ENCODE measurements at regions of chr7 and their contacts with region 1.

Region 1: DNA sequence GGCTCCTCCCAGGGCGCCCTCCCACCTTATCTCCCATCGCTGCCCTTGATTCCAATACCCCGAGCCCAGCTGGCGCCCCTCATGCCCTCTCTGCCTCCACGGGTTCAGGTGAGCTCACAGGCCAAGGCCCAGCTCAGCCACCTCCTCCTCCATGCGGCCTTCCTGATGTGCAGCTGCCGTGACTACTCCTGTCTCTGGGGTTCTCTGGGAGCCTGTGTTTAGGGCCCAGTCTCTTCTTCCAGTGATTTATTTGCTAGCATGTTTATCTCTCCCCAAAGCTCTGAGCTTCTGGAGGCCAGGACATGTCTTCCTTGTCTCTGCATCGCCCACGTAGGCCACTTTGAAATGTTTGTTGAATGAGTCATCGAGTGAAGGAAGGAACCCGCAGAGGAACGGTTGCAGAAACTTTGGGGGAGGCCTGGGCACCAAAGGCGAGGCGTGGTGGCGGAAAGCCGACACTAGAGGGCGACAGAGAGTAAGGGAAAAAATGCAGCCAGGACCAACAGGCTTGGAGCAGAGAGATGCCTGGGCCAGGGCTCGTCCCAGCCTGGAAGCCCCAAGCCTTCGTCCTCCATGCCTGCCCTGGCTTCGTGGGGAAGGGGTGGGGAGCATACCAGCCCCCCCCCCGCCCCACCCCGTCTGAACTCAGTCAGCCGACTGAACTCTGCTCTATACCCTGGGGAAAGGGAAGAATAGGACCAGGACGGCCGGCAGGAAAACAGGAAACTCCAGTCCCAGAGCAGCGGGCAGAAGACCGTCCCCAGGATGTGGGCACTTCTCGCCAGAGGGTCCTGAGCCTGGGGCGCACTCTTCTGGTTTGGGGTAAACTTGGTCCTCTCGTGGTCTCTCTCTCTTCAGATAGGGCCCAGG is 10.9 kb upstream of the HSPB1 start:
- H3K4me3 ChIP-seq: no peak overlapping the region
- H3K27ac ChIP-seq: peak overlapping the region; percentile 48; the same call in 1 of the 2 replicates
- H3K4me1 ChIP-seq: no peaks in the 10 kb centered on the region
- CTCF ChIP-seq: peak; percentile 80

Region 2: DNA sequence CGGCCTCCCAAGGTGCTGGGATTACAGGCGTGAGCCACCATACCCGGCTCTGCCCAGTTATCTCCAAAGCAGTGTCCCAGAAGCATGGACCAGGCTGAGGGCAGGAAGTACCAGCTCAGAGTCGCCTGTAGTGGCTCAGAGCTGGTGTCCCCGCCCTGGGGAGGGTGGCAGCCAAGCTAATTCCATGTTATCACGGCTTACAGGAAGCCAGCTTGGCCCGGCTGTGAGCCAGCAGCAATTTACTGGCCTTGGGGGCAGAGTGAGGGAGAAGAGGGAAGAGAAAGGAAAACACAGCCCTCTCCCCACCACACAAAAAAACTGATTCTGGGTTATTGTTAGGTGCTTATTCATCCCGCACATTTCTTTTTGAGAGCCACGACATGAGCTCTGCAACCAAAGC is 640.9 kb before region 1 on chr7:
- CTCF ChIA-PET with region 1: no interaction called
- POLR2A ChIA-PET with region 1: interaction called, 12 read pairs
- H3K4me3 ChIP-seq: no peak overlapping the region
- H3K27ac ChIP-seq: no peak overlapping the region
- H3K4me1 ChIP-seq: no peaks in the 10 kb centered on the region
- CTCF ChIP-seq: no peak

Region 3: GRCh38 chr7:75827638-75828037 is 463.9 kb before region 1 on chr7:
- CTCF ChIA-PET with region 1: no interaction called
- POLR2A ChIA-PET with region 1: no interaction called
- H3K4me3 ChIP-seq: no peak overlapping the region
- H3K27ac ChIP-seq: no peak overlapping the region
- H3K4me1 ChIP-seq: no peaks in the 10 kb centered on the region
- CTCF ChIP-seq: no peak

Region 4: GRCh38 chr7:75847707-75848106 is 443.9 kb before region 1 on chr7:
- CTCF ChIA-PET with region 1: no interaction called
- POLR2A ChIA-PET with region 1: no interaction called
- H3K4me3 ChIP-seq: no peak overlapping the region
- H3K27ac ChIP-seq: no peak overlapping the region
- H3K4me1 ChIP-seq: no peaks in the 10 kb centered on the region
- CTCF ChIP-seq: no peak

Region 5: DNA sequence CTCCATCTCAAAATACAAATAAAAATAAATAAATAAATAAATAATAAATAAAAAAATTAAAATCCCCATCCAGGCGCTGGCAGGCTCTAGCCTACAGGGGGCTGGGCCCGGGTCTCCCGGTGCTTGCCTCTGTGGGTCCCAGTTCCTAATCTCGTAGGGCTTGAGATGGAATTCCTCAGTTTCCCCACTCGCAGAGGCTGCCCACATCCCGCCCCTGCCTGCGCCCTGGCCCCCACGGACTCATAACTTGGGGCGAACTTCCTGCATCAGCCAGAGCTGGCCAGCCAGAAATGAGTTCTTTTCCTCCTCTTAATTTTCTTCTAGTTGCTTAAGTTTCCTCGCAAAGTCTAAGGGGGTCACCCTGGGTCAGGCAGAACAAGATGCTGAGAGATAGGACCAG is 111.9 kb before region 1 on chr7:
- CTCF ChIA-PET with region 1: interaction called, 19 read pairs
- POLR2A ChIA-PET with region 1: no interaction called
- H3K4me3 ChIP-seq: no peak overlapping the region
- H3K27ac ChIP-seq: no peak overlapping the region
- H3K4me1 ChIP-seq: no peaks in the 10 kb centered on the region
- CTCF ChIP-seq: no peak

Region 6: DNA sequence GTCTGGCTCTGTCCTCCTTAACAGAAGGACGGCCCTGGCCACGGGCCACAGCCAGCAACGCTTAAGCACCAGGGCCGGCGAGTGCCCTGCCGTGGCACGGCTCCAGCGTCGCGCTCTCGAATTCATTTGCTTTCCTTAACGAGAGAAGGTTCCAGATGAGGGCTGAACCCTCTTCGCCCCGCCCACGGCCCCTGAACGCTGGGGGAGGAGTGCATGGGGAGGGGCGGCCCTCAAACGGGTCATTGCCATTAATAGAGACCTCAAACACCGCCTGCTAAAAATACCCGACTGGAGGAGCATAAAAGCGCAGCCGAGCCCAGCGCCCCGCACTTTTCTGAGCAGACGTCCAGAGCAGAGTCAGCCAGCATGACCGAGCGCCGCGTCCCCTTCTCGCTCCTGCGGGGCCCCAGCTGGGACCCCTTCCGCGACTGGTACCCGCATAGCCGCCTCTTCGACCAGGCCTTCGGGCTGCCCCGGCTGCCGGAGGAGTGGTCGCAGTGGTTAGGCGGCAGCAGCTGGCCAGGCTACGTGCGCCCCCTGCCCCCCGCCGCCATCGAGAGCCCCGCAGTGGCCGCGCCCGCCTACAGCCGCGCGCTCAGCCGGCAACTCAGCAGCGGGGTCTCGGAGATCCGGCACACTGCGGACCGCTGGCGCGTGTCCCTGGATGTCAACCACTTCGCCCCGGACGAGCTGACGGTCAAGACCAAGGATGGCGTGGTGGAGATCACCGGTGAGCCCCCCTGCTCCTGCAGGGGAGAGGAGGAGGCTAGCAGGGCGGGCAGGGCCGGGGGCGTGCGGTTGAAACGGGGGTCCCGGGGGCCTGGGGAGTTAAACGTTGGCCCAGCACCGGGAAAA is 11.0 kb after region 1 on chr7 and contains the start of gene HSPB1:
- CTCF ChIA-PET with region 1: interaction called, 48 read pairs
- POLR2A ChIA-PET with region 1: interaction called, 9 read pairs
- H3K4me3 ChIP-seq: peak within 1 kb of the TSS; percentile 37
- H3K27ac ChIP-seq: peak within 1 kb of the TSS; percentile 35; the same call in 1 of the 2 replicates
- H3K4me1 ChIP-seq: peaks cover 2% of the 10 kb centered on the region; the same call in 1 of the 2 replicates
- CTCF ChIP-seq: 0 out of 2 replicates have a peak, but pooled peaks have one; percentile 31